AG04449 (cell line): ENCODE measurements at regions of chr4 and their contacts with region 1.

Region 1: DNA sequence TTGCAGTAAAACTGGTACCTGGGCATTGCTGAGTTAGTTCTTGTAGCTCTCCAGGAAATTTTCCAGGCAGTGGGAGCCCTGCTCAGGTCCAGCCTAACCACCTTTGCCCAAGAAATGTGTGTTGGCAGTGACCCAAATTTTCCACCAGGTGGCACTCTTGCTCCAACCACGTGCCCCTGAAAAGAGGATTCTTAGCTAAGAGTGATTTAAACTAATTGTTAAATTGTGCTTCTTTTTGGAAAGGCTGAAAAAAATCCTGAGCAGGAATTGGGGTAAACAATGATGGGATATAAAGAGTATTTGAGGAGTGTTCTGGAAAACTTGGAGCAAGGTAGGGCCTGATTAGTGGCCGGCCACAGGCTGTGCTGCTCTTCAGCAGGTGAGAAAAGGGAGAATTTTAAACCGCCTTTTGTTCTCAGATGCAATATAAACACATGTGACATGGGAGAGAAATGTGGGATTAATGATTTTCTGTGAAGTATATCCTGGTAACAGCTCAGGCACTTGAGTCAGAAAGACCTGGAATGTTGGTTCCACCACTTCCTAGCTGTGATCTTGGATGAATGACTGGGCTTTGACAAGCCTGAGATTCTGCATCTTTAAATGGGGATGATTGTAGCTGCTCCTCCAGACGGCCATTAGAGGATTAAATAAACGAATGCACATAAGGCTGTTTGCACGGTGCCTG is 219.6 kb downstream of the PTTG2 start:
- DNase-seq: no peak
- H3K4me3 ChIP-seq: no peak overlapping the region
- CTCF ChIP-seq: peak; percentile 75

Region 2: GRCh38 chr4:38069271-38069760 is 110.5 kb before region 1 on chr4:
- CTCF ChIA-PET with region 1: interaction called, 11 read pairs
- POLR2A ChIA-PET with region 1: no interaction called
- DNase-seq: no peak
- H3K4me3 ChIP-seq: no peak overlapping the region
- CTCF ChIP-seq: peak; percentile 24

Region 3: DNA sequence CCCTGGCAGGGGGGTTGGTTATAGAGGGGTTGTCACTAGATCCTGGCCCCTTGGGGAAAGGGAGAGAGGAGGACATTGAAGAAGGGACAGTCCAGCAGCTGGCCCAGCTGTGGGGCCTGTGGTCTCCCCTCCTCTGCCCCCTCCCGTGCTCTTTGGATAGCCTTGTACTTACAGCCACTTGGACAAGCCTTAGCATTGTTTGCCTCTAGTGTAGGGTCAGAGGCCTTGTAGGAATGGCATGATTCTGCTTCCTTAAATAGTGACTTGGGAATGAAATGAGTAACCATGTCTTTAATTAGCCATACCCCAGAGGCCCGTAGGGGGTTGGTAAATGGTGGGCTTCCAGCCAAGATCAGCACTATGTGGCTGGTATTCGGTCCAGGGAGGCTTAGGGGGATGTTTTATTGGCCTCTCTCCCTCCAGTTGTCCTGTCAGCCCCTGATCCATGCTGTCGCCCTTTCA is 10.9 kb after region 1 on chr4:
- CTCF ChIA-PET with region 1: interaction called, 10 read pairs
- POLR2A ChIA-PET with region 1: no interaction called
- DNase-seq: peak; percentile 54
- H3K4me3 ChIP-seq: no peak overlapping the region
- CTCF ChIP-seq: no peak

Region 4: DNA sequence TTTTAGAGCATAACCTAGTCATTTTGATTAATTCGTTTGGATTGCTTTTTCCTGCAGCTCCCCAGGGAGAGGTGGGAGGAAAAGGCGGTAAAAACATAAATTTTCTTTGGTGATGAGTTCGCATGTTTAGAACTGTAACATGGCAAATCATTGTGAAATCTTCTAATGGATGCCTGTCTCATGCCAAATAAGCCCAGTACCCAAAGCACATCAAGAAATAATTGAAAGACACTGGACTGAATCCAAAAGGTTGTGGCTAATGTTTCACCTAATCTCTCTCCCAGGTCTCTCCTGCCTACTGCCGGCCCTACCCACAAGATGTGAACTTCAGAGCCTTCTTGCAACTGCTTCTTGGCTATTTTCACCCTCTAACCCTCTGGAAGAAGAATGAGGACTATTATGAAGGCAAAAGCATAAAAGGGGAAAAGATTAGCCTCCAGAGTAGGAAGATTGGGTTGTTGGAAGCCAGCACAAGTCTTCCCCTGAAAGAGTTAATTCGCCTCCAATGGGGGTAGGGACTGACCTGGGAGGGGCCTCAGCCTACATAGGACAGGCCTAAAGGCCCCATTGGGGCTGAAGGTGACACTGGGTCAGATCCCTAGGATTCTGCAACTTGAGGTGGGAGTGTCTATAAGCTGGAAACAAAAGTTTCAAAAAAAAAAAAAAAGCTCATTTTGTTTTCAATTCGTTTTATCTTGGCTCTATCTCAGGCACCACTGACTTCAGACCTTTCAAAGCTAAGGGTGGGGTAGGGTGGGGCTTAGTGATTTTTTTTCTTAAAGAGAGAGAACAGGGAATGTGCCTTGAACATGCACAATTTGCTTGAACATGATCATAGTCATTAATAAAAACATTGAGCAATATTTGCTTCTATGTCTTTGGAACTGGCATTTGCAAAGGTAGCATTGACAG is 205.5 kb after region 1 on chr4:
- CTCF ChIA-PET with region 1: no interaction called
- POLR2A ChIA-PET with region 1: no interaction called
- DNase-seq: no peak
- H3K4me3 ChIP-seq: no peak overlapping the region
- CTCF ChIP-seq: no peak

Region 5: GRCh38 chr4:38663801-38664705 is 484.2 kb after region 1 on chr4 and contains the start of gene KLF3:
- CTCF ChIA-PET with region 1: interaction called, 13 read pairs
- POLR2A ChIA-PET with region 1: no interaction called
- DNase-seq: peak; percentile 24
- H3K4me3 ChIP-seq: peak within 1 kb of the TSS; percentile 72
- CTCF ChIP-seq: no peak

Region 6: GRCh38 chr4:38730830-38731646 is 551.2 kb after region 1 on chr4:
- CTCF ChIA-PET with region 1: interaction called, 104 read pairs
- POLR2A ChIA-PET with region 1: interaction called, 4 read pairs
- DNase-seq: peak; percentile 91
- H3K4me3 ChIP-seq: no peak overlapping the region
- CTCF ChIP-seq: peak; percentile 97

Region 7: DNA sequence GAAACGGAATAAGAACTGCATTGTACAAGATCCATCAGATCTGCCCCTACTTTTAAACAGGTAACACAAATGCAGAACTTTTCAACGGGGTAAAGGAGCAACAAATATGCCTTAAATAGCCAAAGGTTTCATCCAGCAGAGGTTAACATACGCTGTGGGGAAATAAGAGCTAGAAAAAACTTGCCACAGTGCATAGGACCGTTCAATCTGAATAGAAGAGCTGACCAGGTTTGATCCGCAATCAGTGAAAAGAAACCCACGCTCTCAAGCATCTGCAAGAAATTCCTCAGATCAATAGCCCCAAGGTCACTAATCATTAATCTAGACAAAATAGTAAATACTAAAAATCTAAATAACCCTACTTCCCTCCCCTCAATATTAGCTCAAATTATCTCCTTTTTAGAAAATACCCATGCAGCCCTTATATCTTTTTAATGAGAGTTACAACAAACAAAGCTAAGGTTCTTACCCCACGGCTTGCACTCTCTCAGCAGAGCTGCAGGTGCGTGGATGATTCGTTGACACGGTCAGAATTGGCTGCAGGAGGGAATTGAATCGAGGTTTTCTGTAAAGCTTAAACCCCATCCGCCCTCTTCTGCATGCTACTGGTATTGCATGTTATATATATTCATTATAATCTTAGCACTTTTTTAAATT is 602.7 kb after region 1 on chr4 and contains the start of gene TLR10:
- CTCF ChIA-PET with region 1: interaction called, 41 read pairs
- POLR2A ChIA-PET with region 1: no interaction called
- DNase-seq: no peak
- H3K4me3 ChIP-seq: no peak within 1 kb of the TSS
- CTCF ChIP-seq: peak; percentile 47